HEK293 (cell line): ENCODE measurements at regions of chr4 and their contacts with region 1.

Region 1: DNA sequence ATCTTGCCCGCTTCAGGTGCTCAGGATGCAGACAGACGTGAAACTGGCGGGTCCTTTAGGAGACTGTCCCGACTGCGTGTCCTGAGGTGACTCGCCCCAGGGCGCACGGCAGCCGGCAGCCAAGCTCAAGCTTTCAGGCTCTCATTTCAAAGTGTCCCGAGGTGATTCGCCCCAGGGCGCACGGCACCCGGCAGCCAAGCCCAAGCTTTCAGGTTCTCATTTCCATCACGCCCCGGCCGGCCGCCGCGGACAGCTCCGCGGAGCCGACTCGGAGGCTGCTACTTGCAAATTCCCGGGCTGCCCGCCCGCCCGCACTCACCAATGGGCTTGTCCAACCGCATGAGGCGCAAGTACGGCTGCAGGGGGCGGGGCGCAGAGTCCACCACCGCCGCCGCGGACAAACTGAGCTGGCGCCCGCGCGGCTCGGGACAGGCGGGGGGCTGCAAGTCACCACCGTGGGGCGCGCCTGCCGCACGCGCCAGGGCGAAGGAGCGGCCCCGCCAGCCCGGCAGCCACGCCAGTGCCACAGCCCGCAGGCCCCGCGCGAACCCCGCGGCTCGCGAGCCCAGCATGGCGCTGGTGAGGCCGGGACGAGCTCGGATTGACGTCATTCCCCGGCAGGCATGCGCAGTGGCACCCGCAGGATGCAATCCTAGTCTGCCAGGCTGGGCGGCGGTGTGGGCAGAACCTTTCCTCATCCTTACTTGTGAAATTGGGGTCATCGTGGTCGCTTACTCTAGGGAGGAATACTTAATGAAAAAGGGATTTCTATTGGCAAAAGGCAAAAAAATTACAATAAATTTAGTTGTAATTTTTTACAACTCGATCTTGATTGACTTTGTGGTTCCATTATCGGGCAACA is at the start of gene COQ2:
- H3K4me3 ChIP-seq: peak within 1 kb of the TSS; percentile 55
- H3K27ac ChIP-seq: peak within 1 kb of the TSS; percentile 86
- H3K4me1 ChIP-seq: no peaks in the 10 kb centered on the region
- CTCF ChIP-seq: peak; percentile 64; the same call in 1 of the 2 replicates

Region 2: GRCh38 chr4:83034630-83035494 is 249.6 kb before region 1 on chr4 and contains the start of gene COPS4:
- CTCF ChIA-PET with region 1: interaction called, 4 read pairs
- POLR2A ChIA-PET with region 1: interaction called, 15 read pairs
- H3K4me3 ChIP-seq: peak within 1 kb of the TSS; percentile 89
- H3K27ac ChIP-seq: peak within 1 kb of the TSS; percentile 54
- H3K4me1 ChIP-seq: no peaks in the 10 kb centered on the region
- CTCF ChIP-seq: 0 out of 2 replicates have a peak, but pooled peaks have one; percentile 17

Region 3: DNA sequence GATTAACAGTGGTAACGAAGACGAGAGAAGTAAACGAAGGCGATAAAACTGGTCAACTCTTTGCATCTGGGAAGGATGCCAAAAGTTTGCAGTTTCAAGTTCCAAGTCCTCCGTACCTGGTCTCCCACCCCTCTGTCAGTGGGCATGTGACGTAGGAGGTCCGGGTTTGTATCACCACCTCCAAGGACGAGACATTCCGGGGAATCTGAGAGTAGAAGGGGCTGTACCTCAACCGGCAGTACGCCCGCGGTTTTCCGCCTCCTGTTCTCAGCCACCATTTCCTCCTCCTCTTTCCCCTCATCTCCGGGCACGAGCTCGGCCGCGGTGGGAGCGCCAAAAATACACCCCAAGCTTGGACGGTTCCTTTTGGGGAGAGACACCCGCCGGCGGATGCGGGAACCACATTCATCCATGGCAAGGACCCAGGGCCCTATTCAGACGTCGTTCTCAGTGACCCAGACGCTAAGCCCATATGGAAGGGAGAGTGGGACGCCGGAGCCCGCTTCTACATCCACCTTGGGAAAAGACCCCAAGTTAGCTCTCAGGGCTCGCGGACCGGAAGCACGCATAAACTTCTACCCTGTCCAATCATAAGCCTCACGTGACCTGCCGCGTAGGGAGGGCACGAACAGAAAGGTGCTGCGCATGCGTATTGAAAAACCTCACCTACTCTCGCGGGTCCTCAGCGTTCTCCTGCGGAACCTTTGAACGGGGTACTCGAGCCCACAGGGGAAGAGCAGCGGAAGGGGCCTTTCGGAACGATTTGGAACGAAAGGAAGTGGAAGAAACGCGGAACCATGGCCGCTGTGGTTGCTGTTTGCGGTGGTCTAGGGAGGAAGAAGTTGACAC is 171.1 kb after region 1 on chr4 and contains the starts of genes HELQ and MRPS18C:
- CTCF ChIA-PET with region 1: no interaction called
- POLR2A ChIA-PET with region 1: interaction called, 10 read pairs
- H3K4me3 ChIP-seq: peak within 1 kb of the TSS; percentile 84
- H3K27ac ChIP-seq: peak within 1 kb of the TSS; percentile 89
- H3K4me1 ChIP-seq: no peaks in the 10 kb centered on the region
- CTCF ChIP-seq: no peak

Region 4: DNA sequence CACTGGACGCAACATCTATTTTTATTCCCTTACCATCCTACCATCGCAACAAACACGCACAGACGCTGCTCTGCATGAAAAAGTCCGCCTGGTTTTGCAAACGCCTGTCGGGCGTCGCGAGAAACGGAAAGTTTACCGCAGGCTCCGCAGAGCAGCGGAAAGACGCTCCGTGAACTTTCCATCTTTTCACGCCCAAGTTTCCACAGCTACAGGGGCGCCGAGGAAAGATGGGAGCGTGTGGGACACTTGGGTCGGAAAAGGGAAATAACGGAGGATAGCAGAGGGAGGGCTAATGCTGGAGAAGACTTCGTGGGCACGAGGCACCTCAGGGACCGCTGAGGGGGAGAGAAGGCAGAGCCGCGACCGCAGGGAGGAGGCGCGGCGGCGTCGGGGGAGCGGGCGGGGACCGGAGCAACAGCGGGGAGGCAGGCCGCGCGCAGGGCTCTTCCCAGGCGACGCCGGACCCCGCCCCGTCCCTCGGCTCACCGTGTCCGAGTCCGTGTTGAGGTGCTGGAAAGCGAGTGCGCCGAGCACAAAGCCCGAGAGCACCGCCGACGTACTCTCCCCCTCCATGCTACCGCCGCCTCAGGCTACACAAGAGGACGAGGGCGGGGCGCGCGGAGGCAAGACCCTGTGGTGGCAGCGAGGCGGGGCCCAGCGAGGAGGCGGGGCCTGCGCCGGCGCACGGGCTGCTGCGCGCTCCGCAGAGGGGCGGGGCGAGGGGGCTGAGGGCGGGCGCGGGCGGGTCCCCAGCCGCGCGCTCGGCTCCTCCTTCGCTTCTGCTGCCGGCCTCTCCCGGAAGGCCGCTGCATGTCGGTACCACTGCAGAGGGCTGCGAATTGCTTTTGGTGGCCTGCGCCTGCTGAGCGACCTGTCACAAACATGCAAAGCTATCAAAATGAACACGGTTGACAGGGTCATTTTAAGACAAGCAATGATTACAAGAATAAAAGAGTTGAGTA is 200.4 kb after region 1 on chr4 and contains the start of gene ABRAXAS1:
- CTCF ChIA-PET with region 1: no interaction called
- POLR2A ChIA-PET with region 1: no interaction called
- H3K4me3 ChIP-seq: peak within 1 kb of the TSS; percentile 51
- H3K27ac ChIP-seq: peak within 1 kb of the TSS; percentile 40; the same call in 1 of the 2 replicates
- H3K4me1 ChIP-seq: no peaks in the 10 kb centered on the region
- CTCF ChIP-seq: peak; percentile 35; the same call in 1 of the 2 replicates